HEK293 (cell line): ENCODE measurements at regions of chr19 and their contacts with region 1.

Region 1: DNA sequence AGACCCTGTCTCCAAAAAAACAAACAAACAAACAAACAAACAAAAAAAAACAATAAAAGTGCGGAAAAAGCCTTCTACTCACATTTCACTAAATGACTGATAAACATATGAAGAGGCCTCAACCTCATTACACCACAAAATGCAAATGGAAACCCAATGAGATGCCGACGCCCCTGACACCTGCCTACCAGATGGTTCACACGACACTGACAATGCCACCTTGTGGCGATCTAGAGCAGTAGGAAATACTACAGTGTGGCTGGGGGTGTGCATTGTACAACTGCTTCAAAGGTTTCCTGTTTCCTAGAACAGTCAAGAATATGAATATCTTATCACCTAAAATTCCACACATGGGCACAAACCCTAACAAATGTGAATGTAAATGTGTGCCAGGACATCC is 14.0 kb downstream of the SCGB2B2 start:
- H3K4me3 ChIP-seq: no peak overlapping the region
- H3K27ac ChIP-seq: no peak overlapping the region
- H3K4me1 ChIP-seq: no peaks in the 10 kb centered on the region; the same call in 1 of the 2 replicates
- CTCF ChIP-seq: peak; percentile 47; the same call in 1 of the 2 replicates

Region 2: GRCh38 chr19:34645551-34645950 is 17.4 kb before region 1 on chr19:
- CTCF ChIA-PET with region 1: interaction called, 64 read pairs
- POLR2A ChIA-PET with region 1: no interaction called
- H3K4me3 ChIP-seq: no peak overlapping the region
- H3K27ac ChIP-seq: no peak overlapping the region
- H3K4me1 ChIP-seq: no peaks in the 10 kb centered on the region
- CTCF ChIP-seq: no peak

Region 3: GRCh38 chr19:34744896-34745690 is 82.2 kb after region 1 on chr19:
- CTCF ChIA-PET with region 1: no interaction called
- POLR2A ChIA-PET with region 1: interaction called, 13 read pairs
- H3K4me3 ChIP-seq: no peak overlapping the region
- H3K27ac ChIP-seq: no peak overlapping the region
- H3K4me1 ChIP-seq: no peaks in the 10 kb centered on the region
- CTCF ChIP-seq: no peak